Dorsolateral prefrontal cortex (tissue), 120 donors: ENCODE measurements at regions of chrX and their contacts with region 1.

Region 1: GRCh38 chrX:68196939-68197791 is 236.1 kb downstream of the OPHN1 start:
- DNase-seq: peak in 5 of 10 donors; percentile 7 to 44 (median 38)
- H3K4me3 ChIP-seq: no peak overlapping the region
- H3K27ac ChIP-seq: peak overlapping the region in 28 of 59 donors; percentile 5 to 62 (median 36)
- H3K27me3 ChIP-seq: peaks cover 0 to 51% (median 5%) of the 10 kb centered on the region in 45 donors
- CTCF ChIP-seq: peak; percentile 47 to 85 (median 72)

Region 2: GRCh38 chrX:68433155-68433980 is 236.2 kb after region 1 on chrX and contains the start of gene OPHN1:
- intact Hi-C with region 1: loop called in 1 of 2 experiments (anchors 10 kb)
- DNase-seq: peak; percentile 30 to 80 (median 76)
- H3K4me3 ChIP-seq: peak within 1 kb of the TSS; percentile 48 to 81 (median 66)
- H3K27ac ChIP-seq: peak within 1 kb of the TSS in 55 of 59 donors; percentile 22 to 89 (median 73)
- H3K27me3 ChIP-seq: peaks cover 0 to 72% (median 17%) of the 10 kb centered on the region in 45 donors
- CTCF ChIP-seq: no peak
- total RNA-seq, gene OPHN1: 19.7 to 56.9 (median 31.7) TPM

Region 3: GRCh38 chrX:68462653-68463052 is 265.5 kb after region 1 on chrX:
- intact Hi-C with region 1: loop called (anchors 10 kb)
- DNase-seq: peak in 2 of 10 donors; percentile 14 to 15
- H3K4me3 ChIP-seq: peak overlapping the region in 13 of 59 donors; percentile 1 to 39 (median 18)
- H3K27ac ChIP-seq: no peak overlapping the region
- H3K27me3 ChIP-seq: peaks cover 0 to 43% (median 7%) of the 10 kb centered on the region in 45 donors
- CTCF ChIP-seq: peak; percentile 29 to 75 (median 58)

Region 4: DNA sequence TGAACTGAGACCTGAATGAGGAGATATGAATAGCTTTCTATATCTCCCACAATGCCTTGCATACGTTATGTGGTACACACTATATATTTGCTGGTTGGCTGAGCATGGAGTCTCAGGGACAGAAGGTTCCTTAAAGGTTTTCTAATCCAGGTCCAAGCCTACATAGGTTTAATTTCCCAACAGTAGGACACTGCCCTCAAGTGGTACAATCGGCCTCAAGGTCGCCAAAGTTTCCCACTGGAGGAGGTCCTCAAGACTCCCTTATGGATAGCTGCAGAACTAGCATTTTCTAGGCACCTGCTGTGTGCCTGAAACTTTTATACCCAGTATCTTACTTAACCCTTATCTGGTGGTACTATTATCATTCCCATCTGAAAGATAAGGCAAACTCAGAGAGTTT is 610.7 kb after region 1 on chrX:
- intact Hi-C with region 1: loop called in 1 of 2 experiments (anchors 5 kb)
- DNase-seq: no peak
- H3K4me3 ChIP-seq: no peak overlapping the region
- H3K27ac ChIP-seq: no peak overlapping the region
- H3K27me3 ChIP-seq: peaks cover 0 to 87% (median 26%) of the 10 kb centered on the region in 45 donors
- CTCF ChIP-seq: peak in 37 of 56 donors; percentile 14 to 58 (median 32)